Astrocyte of the cerebellum (primary cell): ENCODE measurements at regions of chr5 and their contacts with region 1.

Region 1: DNA sequence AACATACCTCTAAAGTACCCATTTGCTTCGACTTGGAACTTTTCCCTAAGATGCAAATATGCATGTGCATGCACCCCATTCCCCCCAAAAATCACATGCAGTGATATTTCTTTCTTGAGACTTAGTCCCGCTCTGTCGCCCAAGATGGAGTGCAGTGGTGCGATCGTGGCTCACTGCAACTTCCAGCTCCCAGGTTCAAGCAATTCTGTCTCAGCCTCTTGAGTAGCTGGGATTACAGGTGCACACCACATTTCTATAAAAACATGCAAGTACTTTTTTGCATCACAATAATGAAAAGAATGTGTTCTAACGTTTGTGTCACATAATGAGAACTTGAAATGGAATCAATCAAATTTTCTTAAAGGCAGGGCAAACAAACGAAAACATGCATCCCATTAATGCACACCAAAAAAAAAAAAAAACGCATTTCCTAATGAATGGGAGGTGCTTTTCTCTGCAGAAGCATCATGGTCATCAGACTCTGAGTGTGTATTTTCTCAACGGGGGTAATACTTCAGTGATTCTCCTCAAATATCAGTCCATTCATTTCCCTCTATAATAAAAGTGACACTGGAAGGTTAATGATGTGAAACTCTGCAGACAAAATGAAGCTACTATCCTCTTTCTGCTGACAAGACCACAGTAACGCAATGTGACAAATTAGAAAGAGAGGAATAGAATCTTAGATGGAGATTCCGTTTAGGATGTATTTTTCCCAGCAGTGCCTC is 389.4 kb downstream of the CTNND2 start:
- DNase-seq: no peak
- H3K4me3 ChIP-seq: no peak overlapping the region
- CTCF ChIP-seq: no peak

Region 2: DNA sequence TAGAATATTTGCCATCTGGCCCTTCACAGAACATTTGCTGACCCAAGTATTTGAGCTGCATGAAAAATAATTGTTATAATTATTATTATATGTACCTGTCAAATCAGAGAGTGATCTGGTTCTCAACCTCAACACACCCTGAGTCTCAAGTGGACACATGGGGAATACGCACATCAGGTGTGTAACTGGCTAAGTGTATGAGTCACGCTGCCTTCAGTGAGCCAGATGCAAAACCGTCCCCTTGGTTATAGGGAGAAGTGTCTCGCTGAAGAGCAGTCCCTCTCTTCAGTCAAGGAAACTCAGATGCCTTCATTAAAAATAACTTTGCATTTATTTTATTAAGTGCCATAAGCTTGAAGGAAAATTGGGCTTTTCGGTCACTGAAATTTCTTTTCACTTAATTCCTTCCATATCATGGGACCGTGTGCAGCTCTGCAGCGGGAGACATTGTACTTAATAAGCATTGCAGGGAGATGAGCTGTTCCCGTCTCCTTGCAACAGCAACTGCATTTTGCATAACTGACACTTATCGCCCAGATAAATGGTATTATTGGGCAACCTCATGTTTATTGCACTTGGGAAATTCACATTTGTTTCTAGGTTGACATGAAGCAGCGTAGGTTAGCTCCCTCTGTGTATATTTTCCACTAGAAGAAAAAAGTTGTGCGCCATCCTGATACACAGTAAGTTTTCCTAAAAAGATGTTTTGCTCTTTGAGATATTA is 241.5 kb before region 1 on chr5:
- in situ Hi-C with region 1: no loop called
- DNase-seq: no peak
- H3K4me3 ChIP-seq: no peak overlapping the region
- CTCF ChIP-seq: no peak

Region 3: GRCh38 chr5:11452852-11453251 is 62.0 kb before region 1 on chr5:
- in situ Hi-C with region 1: no loop called
- DNase-seq: no peak
- H3K4me3 ChIP-seq: no peak overlapping the region
- CTCF ChIP-seq: no peak

Region 4: GRCh38 chr5:11468334-11469039 is 46.4 kb before region 1 on chr5:
- in situ Hi-C with region 1: loop called (anchors 5 kb)
- DNase-seq: peak; percentile 32
- H3K4me3 ChIP-seq: no peak overlapping the region
- CTCF ChIP-seq: no peak

Region 5: GRCh38 chr5:11547745-11548144 is 32.9 kb after region 1 on chr5:
- in situ Hi-C with region 1: loop called (anchors 5 kb)
- DNase-seq: no peak
- H3K4me3 ChIP-seq: no peak overlapping the region
- CTCF ChIP-seq: no peak

Region 6: GRCh38 chr5:11573140-11573992 is 58.5 kb after region 1 on chr5:
- in situ Hi-C with region 1: no loop called
- DNase-seq: no peak
- H3K4me3 ChIP-seq: no peak overlapping the region
- CTCF ChIP-seq: no peak